Activated CD4-positive, alpha-beta T cell treated with anti-CD3 and anti-CD28 coated beads, Interleukin-2, amount 10 ng/mL, durations not matched to agents 24 days and 14 days (primary cell): ENCODE measurements at regions of chr13 and their contacts with region 1.

Region 1: DNA sequence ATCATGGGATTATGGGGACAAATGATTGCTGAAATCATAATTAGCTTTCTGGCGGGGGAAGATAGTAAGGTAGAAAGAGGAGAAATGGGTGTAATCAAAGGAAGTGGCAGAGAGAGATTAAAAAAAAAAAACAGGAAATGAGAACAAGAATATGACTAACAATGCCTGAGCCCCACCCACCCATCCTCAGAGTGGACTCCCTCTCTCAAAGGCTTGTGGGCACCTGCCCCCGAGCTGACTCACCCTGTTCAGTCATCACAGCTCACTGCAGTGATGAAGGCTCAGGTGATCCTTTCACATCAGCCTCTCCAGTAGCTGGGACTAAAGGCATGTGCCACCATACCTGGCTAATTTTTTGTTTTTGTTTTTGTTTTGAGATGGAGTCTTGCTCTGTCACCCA is 26.4 kb upstream of the TPT1 start:
- DNase-seq: peak; percentile 95
- H3K4me3 Mint-ChIP-seq: peak overlapping the region; percentile 76
- H3K27ac Mint-ChIP-seq: peak overlapping the region; percentile 95
- H3K4me1 Mint-ChIP-seq: peaks cover 54% of the 10 kb centered on the region
- H3K27me3 Mint-ChIP-seq: no peaks in the 10 kb centered on the region

Region 2: GRCh38 chr13:45332036-45332830 is 35.1 kb before region 1 on chr13:
- intact Hi-C with region 1: loop called (anchors 5 kb)
- DNase-seq: no peak
- H3K4me3 Mint-ChIP-seq: no peak overlapping the region
- H3K27ac Mint-ChIP-seq: no peak overlapping the region
- H3K4me1 Mint-ChIP-seq: peaks cover 75% of the 10 kb centered on the region
- H3K27me3 Mint-ChIP-seq: no peaks in the 10 kb centered on the region

Region 3: DNA sequence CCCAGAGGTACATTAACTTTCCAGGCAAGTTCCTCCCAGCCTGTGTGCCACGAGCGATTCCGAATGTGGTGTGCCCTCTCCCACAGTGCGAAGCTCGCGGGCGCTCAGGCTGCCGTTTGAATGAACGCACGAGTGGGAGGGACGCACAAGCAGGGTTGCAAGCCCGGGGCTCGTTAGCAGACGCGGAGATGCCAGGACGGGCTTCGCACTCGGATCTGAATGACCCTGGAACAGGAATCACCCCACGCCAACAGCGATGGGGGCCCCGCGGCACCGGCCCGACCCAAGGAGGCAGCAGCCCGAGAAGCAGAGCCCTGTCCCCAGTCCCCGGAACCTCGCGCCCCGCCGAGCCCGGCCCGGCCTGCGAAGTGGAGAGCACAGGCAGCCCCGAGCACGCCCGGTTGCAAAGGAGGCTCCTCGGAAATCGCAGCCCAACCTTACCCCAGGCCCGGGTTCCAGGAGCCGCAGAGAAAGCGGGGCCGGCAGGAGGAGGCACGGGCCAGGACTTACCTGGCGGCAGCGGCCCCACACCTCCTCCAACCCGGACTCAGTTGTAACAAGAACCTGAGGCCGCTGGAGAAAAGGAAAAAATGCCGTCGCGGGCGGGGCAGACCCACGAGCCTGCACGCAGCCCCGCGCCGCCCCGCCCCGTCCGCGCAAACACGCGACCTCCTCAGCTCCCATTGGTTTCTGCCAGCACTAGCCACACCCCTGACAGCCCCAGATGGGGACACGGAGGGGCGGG is 50.6 kb after region 1 on chr13 and contains the start of gene SLC25A30:
- intact Hi-C with region 1: loop called (anchors 1 kb)
- DNase-seq: peak; percentile 96
- H3K4me3 Mint-ChIP-seq: peak within 1 kb of the TSS; percentile 96
- H3K27ac Mint-ChIP-seq: peak within 1 kb of the TSS; percentile 94
- H3K4me1 Mint-ChIP-seq: peaks cover 19% of the 10 kb centered on the region
- H3K27me3 Mint-ChIP-seq: peaks cover 1% of the 10 kb centered on the region
- total RNA-seq, gene SLC25A30: 12.9 and 14.2 TPM in 2 replicates